GM12878 (cell line): ENCODE measurements at regions of chr9 and their contacts with region 1.

Region 1: DNA sequence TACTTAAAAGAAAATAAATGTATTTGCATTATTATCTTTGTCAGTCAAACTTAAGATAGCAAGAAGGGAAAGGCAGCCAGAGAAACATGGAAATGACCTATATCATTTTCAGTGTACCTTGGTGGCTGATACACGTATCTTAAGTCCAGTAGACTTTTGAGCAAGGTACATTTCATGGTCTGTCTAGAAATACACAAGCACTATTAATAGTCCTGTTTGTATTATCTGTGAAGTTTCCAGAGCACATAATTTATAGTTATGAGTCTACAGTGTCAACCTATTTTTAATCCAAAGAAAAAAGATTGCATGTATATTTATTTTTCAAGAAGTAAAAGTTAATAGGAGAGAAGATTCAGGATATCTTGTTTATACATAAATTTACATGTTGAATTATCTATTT is 95.7 kb downstream of the IZUMO3 start:
- DNase-seq: no peak
- ATAC-seq: no peak
- H3K4me3 ChIP-seq: no peak overlapping the region
- H3K27ac ChIP-seq: no peak overlapping the region
- H3K4me1 ChIP-seq: no peaks in the 10 kb centered on the region
- H3K27me3 ChIP-seq: no peaks in the 10 kb centered on the region
- CTCF ChIP-seq: no peak
- EP300 ChIP-seq: no peak
- POLR2A ChIP-seq: no peak
- RAD21 ChIP-seq: no peak

Region 2: DNA sequence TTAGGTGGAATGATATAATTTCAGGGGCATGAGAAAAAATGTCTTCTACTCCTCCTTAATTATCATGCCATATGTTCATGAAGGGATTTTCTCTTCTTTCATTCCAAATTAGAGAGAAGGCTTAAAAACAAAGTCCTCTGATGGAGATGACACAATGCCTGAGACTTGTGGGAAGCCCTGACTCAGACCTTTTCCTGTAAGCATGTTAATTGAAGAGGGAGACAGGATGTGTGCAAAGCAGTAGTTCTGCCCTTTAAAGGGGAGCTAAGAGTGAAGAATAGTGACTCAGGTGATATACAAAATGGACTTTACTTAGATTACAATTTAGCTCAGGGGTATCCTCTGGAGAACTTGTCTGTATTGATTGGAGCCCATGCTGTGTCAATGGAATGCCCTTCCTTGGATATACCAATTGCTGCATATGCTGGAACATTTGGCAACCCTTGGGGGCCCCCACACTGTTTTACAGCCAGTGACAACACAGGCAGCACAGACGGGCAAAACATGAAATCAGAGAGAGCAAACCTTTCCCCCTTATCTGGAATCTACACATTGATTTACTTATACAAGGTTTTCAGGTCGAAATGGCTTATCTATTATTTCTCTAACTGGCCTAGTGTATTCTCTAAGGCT is 14.5 kb after region 1 on chr9:
- CTCF ChIA-PET with region 1: no interaction called
- POLR2A ChIA-PET with region 1: no interaction called
- RAD21 ChIA-PET with region 1: no interaction called
- SMC1A ChIA-PET with region 1: no interaction called
- in situ Hi-C with region 1: no loop called
- intact Hi-C with region 1: no loop called
- DNase-seq: no peak
- ATAC-seq: no peak
- H3K4me3 ChIP-seq: no peak overlapping the region
- H3K27ac ChIP-seq: no peak overlapping the region
- H3K4me1 ChIP-seq: no peaks in the 10 kb centered on the region
- H3K27me3 ChIP-seq: no peaks in the 10 kb centered on the region
- CTCF ChIP-seq: no peak
- EP300 ChIP-seq: no peak
- POLR2A ChIP-seq: no peak
- RAD21 ChIP-seq: no peak

Region 3: DNA sequence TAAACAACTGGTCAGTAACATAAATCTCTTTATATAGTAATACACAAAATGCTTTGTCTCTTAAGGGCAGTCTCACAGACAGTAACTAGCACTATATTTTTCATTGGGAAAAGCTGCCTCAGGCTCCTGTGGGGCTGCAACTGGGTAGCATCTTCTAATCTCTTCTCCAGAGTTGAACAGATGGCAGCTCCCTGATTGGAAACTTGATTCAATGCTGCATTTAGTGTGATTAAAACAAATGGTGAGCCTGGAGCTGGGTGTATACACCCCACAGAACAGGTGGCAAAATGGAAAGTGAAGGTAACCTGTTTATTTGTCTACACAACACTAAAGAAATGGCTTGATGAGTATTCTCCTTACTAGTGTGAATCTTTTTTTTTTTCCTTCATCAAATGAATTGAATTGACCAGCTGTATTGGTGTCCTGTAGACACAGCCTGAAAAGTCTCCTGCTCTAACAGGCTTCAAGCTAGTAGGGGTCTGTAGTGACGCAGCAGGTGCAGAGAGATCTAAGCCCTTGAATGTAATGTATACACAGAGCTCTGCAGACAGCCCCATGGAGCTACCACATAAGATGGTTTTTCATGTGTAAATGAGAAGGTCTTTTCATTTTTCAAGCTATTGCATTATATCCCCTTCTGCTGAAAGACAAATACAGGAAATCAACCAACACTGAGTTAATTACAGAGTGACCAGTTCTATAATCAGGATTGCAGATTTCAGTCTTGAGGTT is 52.4 kb after region 1 on chr9:
- CTCF ChIA-PET with region 1: no interaction called
- POLR2A ChIA-PET with region 1: no interaction called
- RAD21 ChIA-PET with region 1: no interaction called
- SMC1A ChIA-PET with region 1: no interaction called
- in situ Hi-C with region 1: loop called (anchors 10 kb)
- intact Hi-C with region 1: no loop called
- DNase-seq: no peak
- ATAC-seq: no peak
- H3K4me3 ChIP-seq: no peak overlapping the region
- H3K27ac ChIP-seq: no peak overlapping the region
- H3K4me1 ChIP-seq: no peaks in the 10 kb centered on the region
- H3K27me3 ChIP-seq: no peaks in the 10 kb centered on the region
- CTCF ChIP-seq: no peak
- EP300 ChIP-seq: no peak
- POLR2A ChIP-seq: no peak
- RAD21 ChIP-seq: no peak